ENCODE measurements at regions of chr2 and their contacts with region 1.

Region 1: DNA sequence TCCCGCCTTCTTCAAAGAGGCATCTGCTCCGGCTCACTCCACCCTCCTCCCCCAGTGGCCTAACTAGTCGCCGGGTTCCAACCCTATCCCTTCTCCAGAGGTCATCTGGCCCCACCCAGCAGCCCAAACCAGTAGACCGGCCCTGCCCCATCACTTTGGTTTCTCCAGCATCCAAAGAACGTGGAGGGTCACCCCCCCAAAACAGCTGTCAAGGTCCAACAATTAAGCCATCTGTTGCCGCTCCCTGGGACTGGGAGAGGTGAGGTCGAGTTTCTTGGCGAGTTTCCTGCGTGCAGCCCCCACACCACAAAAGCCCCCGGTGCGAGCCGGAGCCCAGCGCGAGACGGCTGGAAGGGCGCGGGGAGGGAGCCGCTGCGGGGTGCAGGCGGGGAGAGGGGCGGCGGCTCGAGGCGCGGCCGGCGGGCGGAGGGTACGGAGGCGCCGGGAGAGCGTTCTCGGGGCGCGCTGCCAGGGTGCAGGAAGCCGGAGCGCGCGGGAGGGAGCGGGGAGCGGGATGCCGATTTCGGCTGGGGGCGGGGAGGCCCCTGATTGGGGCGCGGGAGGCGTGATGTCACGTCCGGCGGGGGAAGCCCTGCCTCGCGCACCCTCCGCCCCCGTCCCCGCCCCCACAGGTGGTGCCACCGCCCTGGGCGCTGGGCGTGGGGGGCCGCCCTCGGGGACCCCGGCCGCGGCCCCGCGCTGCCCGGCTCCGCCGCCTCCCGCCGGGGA is 571 bp upstream of the GPC1 start:
- DNase-seq: peak; percentile 87 to 90
- H3K4me3 ChIP-seq: peak overlapping the region; percentile 64
- H3K4me3 Mint-ChIP-seq: peak overlapping the region; percentile 73
- H3K27ac Mint-ChIP-seq: no peak overlapping the region
- H3K4me1 ChIP-seq: peaks cover 9% of the 10 kb centered on the region; the same call in 1 of the 2 replicates
- H3K4me1 Mint-ChIP-seq: no peaks in the 10 kb centered on the region
- H3K27me3 ChIP-seq: no peaks in the 10 kb centered on the region
- H3K27me3 Mint-ChIP-seq: no peaks in the 10 kb centered on the region
- CTCF ChIP-seq: no peak

Region 2: GRCh38 chr2:240149943-240150784 is 284.7 kb before region 1 on chr2:
- CTCF ChIA-PET with region 1: interaction called, 3 read pairs
- POLR2A ChIA-PET with region 1: no interaction called
- intact Hi-C with region 1: loop called (anchors 5 kb)
- DNase-seq: peak in 1 of 2 experiments; percentile 47
- H3K4me3 ChIP-seq: no peak overlapping the region
- H3K4me3 Mint-ChIP-seq: no peak overlapping the region
- H3K27ac Mint-ChIP-seq: no peak overlapping the region
- H3K4me1 ChIP-seq: no peaks in the 10 kb centered on the region
- H3K4me1 Mint-ChIP-seq: no peaks in the 10 kb centered on the region
- H3K27me3 ChIP-seq: no peaks in the 10 kb centered on the region
- H3K27me3 Mint-ChIP-seq: peaks cover 3% of the 10 kb centered on the region
- CTCF ChIP-seq: peak; percentile 54 to 68